ENCODE measurements at regions of chr11 and their contacts with region 1.

Region 1: GRCh38 chr11:94583866-94584500 is 16.8 kb downstream of the PIWIL4 start:
- DNase-seq: no peak
- H3K4me3 ChIP-seq: no peak overlapping the region
- H3K27ac ChIP-seq: no peak overlapping the region
- H3K4me1 ChIP-seq: no peaks in the 10 kb centered on the region
- H3K27me3 ChIP-seq: no peaks in the 10 kb centered on the region
- CTCF ChIP-seq: no peak
- POLR2A ChIP-seq: no peak

Region 2: GRCh38 chr11:93099806-93100205 is 1484.2 kb before region 1 on chr11:
- intact Hi-C with region 1: no loop called
- DNase-seq: no peak
- H3K4me3 ChIP-seq: no peak overlapping the region
- H3K27ac ChIP-seq: no peak overlapping the region
- H3K4me1 ChIP-seq: no peaks in the 10 kb centered on the region
- H3K27me3 ChIP-seq: no peaks in the 10 kb centered on the region
- CTCF ChIP-seq: no peak
- POLR2A ChIP-seq: no peak

Region 3: DNA sequence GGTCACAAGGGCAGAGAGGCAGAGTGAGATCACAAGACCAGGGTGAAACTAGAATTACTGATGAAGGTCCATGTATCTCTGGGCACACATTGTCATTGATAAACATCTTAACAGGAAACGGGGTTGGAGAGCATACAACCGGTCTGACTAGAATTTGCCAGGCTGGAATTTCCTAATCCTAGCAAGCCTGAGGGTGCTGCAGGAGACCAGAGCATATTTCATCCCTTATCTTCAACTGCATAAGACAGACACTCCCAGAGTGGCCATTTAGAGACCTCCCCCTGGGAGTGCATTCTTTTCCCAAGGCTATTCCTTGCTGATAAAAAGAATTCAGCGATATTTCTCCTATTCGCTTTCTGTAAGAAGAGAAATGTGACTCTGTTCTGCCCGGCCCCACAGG is 364.2 kb before region 1 on chr11:
- intact Hi-C with region 1: no loop called
- DNase-seq: no peak
- H3K4me3 ChIP-seq: no peak overlapping the region
- H3K27ac ChIP-seq: no peak overlapping the region
- H3K4me1 ChIP-seq: no peaks in the 10 kb centered on the region
- H3K27me3 ChIP-seq: no peaks in the 10 kb centered on the region
- CTCF ChIP-seq: no peak
- POLR2A ChIP-seq: no peak

Region 4: DNA sequence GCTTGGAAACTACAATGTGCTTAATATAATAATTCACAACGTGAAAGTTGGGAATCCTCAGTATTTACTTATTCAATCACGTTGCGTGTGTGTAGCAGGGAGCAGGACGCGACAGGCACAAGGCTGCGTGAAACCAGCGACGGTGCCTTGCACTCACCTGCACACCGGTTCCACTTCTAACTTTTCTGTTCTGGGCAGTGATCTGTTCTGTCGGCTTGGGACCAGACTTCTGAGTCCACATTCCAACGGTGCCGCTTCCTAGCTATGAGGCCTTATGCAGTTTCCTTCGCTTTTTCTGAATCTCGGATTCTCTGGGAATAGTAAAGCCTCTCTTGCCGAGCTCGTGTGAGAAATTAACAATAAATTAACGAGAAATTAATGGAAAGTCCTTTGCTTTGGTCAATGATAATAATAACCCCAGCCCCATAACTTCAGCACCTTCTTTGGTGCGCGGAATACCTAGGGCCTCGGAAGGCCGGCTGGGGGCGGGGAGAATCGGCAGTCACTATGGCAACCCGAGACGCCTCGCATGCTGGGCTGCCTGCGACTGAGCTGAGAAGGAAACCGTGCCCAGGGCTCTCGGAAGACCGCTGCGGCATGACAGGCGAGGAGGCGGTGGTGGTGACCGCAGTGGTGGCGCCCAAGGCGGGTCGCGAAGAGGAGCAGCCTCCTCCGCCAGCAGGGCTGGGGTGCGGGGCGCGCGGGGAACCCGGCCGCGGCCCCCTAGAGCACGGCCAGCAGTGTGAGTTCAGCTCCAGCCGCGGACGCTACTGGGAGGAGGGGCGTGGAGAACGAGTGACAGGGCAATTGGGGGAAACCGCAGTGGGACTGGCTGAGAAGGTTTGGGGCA is 71.8 kb before region 1 on chr11 and contains the start of gene C11orf97:
- intact Hi-C with region 1: loop called (anchors 10 kb)
- DNase-seq: no peak
- H3K4me3 ChIP-seq: peak within 1 kb of the TSS; percentile 44 to 49
- H3K27ac ChIP-seq: no peak within 1 kb of the TSS
- H3K4me1 ChIP-seq: peaks cover 13% of the 10 kb centered on the region
- H3K27me3 ChIP-seq: no peaks in the 10 kb centered on the region
- CTCF ChIP-seq: no peak
- POLR2A ChIP-seq: no peak
- total RNA-seq, gene C11orf97: not detected

Region 5: DNA sequence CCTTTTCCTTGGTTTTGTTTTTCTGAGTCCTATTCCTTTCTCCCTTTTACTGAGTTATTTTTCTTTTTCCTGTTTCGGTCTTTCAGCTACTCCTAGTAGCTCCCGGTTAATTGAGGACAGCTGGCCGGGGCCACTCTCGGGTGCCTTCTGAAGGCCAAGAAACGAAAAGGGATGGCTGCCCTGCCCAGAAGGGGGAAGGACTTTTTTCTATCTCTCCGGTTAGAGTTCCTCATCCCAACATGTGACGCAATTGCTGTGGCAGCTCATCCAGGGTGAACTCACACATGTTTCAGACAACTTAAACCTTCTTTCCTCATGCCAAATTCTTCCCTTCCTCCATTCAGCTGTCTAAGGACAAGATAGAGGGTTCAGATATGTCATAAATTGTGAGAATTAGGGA is 66.8 kb after region 1 on chr11:
- intact Hi-C with region 1: no loop called
- DNase-seq: peak in 1 of 2 donors; percentile 86
- H3K4me3 ChIP-seq: no peak overlapping the region
- H3K27ac ChIP-seq: no peak overlapping the region
- H3K4me1 ChIP-seq: no peaks in the 10 kb centered on the region
- H3K27me3 ChIP-seq: no peaks in the 10 kb centered on the region
- CTCF ChIP-seq: no peak
- POLR2A ChIP-seq: no peak